ENCODE measurements at regions of chr1 and their contacts with region 1.

Region 1: DNA sequence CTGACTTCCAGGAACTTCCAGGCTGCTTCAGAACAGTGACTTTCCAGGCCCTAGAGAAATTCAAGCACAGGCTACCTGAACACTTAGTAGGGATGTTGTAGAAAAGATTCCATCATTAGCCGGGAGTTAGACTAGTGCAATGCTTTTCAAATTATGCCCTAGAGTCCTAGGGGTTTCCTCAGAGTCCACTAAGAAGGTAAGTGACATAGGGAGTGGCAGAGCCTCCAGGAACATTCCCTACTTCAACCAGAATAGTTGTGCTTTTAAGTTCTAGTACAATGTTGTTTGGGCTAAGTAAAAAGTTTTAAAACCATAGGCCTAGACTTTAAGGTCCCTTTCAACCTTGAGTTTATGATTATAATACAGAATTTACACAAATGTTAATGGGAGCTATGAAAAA is 9.1 kb upstream of the GOLPH3L start:
- DNase-seq: no peak
- ATAC-seq: no peak
- H3K4me3 Mint-ChIP-seq: no peak overlapping the region
- H3K27ac Mint-ChIP-seq: no peak overlapping the region
- H3K4me1 Mint-ChIP-seq: peaks cover 5% of the 10 kb centered on the region
- H3K27me3 Mint-ChIP-seq: no peaks in the 10 kb centered on the region
- CTCF ChIP-seq: no peak

Region 2: GRCh38 chr1:150683914-150684313 is 22.2 kb before region 1 on chr1:
- CTCF ChIA-PET with region 1: no interaction called
- POLR2A ChIA-PET with region 1: interaction called, 4 read pairs
- intact Hi-C with region 1: loop called (anchors 2 kb)
- DNase-seq: no peak
- ATAC-seq: peak; percentile 40
- H3K4me3 Mint-ChIP-seq: no peak overlapping the region
- H3K27ac Mint-ChIP-seq: peak overlapping the region; percentile 43
- H3K4me1 Mint-ChIP-seq: peaks cover 10% of the 10 kb centered on the region
- H3K27me3 Mint-ChIP-seq: no peaks in the 10 kb centered on the region
- CTCF ChIP-seq: no peak